OCI-LY7 (cell line): ENCODE measurements at regions of chr11 and their contacts with region 1.

Region 1: DNA sequence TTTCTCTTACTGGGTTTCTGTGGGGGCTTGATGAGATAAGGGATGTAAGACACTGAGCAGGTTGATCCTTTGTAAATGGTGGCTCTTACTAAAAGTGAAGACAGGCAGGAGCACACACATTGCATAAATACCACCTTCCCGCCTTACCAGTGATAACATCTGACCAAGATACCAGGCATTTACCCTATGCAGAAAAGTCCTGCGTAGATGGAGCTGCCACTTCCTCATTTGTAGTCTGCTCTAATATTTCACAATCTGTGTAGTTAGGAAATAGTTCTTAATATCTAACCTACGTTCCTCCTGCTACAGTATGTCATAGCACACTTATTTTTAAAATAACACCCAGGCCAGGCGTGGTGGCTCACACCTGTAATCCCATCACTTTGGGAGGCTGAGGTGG is 23.9 kb upstream of the SWAP70 start:
- DNase-seq: peak; percentile 41
- H3K4me3 ChIP-seq: no peak overlapping the region
- H3K27ac ChIP-seq: no peak overlapping the region
- H3K4me1 ChIP-seq: peaks cover 41% of the 10 kb centered on the region
- CTCF ChIP-seq: no peak

Region 2: GRCh38 chr11:8878771-8879170 is 761.2 kb before region 1 on chr11:
- CTCF ChIA-PET with region 1: no interaction called
- POLR2A ChIA-PET with region 1: no interaction called
- intact Hi-C with region 1: no loop called
- DNase-seq: no peak
- H3K4me3 ChIP-seq: no peak overlapping the region
- H3K27ac ChIP-seq: no peak overlapping the region
- H3K4me1 ChIP-seq: no peaks in the 10 kb centered on the region
- CTCF ChIP-seq: no peak

Region 3: DNA sequence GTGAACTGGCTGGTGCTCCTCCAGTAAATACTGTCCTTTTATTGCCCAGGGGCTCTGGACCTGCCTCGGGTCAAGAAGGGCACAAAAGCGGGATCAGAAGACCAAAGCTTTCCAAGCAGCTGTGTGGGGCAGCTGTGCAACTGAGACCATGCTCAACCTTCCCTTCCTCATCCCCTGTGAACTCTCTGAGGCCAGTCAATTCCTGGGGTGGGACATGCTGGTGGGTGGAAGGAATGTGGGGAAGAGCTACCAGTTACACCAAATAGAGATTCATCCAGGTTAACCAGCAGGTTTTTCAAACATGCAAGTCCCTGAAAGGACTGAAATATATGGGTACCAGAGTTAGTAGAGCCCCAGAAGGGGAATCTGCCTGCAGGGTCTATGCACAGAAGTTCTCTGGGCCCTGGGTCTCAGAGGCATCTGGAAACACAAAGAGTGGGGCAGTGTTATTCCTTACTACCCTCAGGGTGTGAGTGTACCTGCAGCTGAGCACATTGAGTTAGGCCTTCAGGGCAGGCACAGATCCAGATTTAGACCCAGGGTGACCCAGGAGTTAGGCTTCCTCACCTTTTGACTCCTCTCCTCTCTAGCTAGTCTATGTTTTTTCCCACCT is 20.1 kb before region 1 on chr11:
- CTCF ChIA-PET with region 1: interaction called, 3 read pairs
- POLR2A ChIA-PET with region 1: interaction called, 17 read pairs
- intact Hi-C with region 1: no loop called
- DNase-seq: no peak
- H3K4me3 ChIP-seq: peak overlapping the region; percentile 7
- H3K27ac ChIP-seq: peak overlapping the region; percentile 55
- H3K4me1 ChIP-seq: peaks cover 64% of the 10 kb centered on the region
- CTCF ChIP-seq: no peak

Region 4: GRCh38 chr11:9625162-9625561 is 14.8 kb before region 1 on chr11:
- CTCF ChIA-PET with region 1: interaction called, 3 read pairs
- POLR2A ChIA-PET with region 1: interaction called, 17 read pairs
- intact Hi-C with region 1: no loop called
- DNase-seq: no peak
- H3K4me3 ChIP-seq: no peak overlapping the region
- H3K27ac ChIP-seq: no peak overlapping the region
- H3K4me1 ChIP-seq: peaks cover 42% of the 10 kb centered on the region
- CTCF ChIP-seq: no peak